ENCODE measurements at regions of chr20 and their contacts with region 1.

Region 1: GRCh38 chr20:33097001-33097400 is 17.6 kb downstream of the BPIFB4 start:
- DNase-seq: no peak
- H3K4me3 ChIP-seq: no peak overlapping the region
- H3K27ac ChIP-seq: no peak overlapping the region
- H3K27me3 ChIP-seq: no peaks in the 10 kb centered on the region
- CTCF ChIP-seq: no peak

Region 2: GRCh38 chr20:32789896-32790750 is 306.9 kb before region 1 on chr20:
- intact Hi-C with region 1: loop called (anchors 5 to 10 kb)
- DNase-seq: peak; percentile 76 to 88 (median 82)
- H3K4me3 ChIP-seq: no peak overlapping the region
- H3K27ac ChIP-seq: peak overlapping the region in 1 of 59 donors; percentile 21
- H3K27me3 ChIP-seq: no peaks in the 10 kb centered on the region
- CTCF ChIP-seq: peak; percentile 82 to 99 (median 98)